ENCODE measurements at regions of chr14 and their contacts with region 1.

Region 1: DNA sequence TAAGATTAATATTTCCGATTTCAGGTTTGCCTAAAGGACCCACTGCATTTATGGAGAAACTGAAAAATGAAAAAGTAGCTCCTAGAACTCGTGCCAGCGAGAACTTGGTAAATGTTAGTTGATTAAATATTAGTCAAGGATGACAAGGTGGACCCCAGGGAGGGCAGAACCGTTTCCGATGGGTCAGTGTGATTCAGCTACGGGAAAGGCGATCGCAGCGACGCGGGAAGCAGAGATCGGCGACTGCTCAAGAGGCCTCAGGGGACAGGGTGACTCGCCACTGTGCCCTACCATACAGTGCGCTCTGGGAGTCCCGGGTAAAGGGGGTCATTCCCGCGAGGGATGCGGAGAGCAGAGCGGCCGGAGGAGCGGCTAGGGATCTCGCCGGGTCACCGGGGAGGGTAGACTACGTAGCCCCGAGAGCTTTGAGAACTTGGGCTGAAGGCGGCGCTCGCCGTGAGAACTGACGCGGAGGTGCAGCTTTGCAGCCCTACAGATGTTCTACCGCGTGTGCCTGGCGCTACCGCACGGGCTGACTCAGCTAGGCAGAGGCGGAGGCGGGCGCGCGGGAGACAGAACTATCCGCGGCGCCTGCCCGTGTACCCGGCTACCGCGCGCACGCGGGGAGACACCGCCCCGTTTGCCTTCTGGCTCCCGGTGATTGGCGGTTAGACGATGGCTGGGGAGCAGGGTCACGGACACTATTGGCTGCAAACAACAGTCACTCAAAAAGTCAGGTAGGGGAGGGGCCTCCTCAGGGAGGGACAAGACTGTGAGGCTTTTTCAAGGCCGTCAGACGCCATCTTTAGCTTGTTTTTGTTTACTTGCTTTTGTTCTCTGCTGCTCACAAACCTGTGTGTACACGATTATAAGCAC is 3.2 kb downstream of the C14orf93 start:
- DNase-seq: peak; percentile 99
- H3K4me3 ChIP-seq: peak overlapping the region; percentile 96
- H3K4me3 Mint-ChIP-seq: peak overlapping the region; percentile 94 to 99 (median 97)
- H3K27ac ChIP-seq: peak overlapping the region; percentile 80
- H3K27ac Mint-ChIP-seq: peak overlapping the region; percentile 90 to 99 (median 97)
- H3K4me1 ChIP-seq: peaks cover 37% of the 10 kb centered on the region
- H3K4me1 Mint-ChIP-seq: peaks cover 17 to 52% (median 34%) of the 10 kb centered on the region in 4 donors
- H3K27me3 ChIP-seq: no peaks in the 10 kb centered on the region
- H3K27me3 Mint-ChIP-seq: no peaks in the 10 kb centered on the region

Region 2: DNA sequence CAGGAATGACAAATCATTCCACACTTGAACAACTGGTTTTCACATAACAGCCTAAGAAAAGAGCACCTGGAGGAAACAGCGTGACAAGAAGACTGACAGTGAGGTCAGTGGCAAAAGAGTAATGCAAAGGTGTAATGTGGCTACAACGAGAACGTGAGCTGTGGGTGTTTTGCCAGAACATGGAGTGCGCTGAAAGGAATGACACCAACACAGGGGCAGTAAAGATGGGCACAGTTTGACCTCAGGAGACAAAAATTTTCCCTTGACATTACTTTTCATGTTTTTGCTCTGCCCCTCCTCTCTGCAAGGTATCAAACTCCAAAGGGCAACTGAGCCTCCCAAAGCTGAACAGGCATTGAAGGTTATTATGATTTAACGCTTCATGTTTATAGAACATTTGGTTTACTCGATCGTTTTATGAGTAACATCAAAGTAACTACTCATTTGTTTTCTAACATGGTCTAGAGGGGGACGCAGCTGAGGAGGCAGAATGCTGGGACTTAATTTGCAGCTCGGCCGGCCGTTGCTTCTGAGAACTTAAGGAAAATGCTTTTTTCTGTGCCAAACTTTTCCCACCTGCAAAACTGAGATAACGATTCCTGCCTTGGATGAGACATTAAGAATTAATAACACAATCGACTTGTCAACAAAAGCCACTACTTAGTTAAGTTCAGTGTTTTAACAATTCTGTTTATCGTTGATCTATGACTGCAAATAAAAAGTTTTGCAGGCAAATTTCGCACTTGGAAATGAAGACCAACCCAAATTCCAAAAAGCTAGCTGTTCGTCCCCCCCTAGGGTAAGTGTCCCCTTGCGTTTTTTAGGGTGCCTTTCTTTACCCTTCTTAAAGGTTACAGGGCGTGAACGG is 50.8 kb before region 1 on chr14:
- CTCF ChIA-PET with region 1: interaction called, 3 read pairs
- POLR2A ChIA-PET with region 1: interaction called, 22 read pairs
- intact Hi-C with region 1: no loop called
- DNase-seq: peak in 1 of 5 donors; percentile 11
- H3K4me3 ChIP-seq: peak overlapping the region; percentile 30 to 89
- H3K4me3 Mint-ChIP-seq: peak overlapping the region; percentile 91 to 94 (median 92)
- H3K27ac ChIP-seq: peak overlapping the region; percentile 79
- H3K27ac Mint-ChIP-seq: peak overlapping the region; percentile 92 to 95 (median 93)
- H3K4me1 ChIP-seq: peaks cover 16% of the 10 kb centered on the region
- H3K4me1 Mint-ChIP-seq: peaks cover 13 to 22% (median 16%) of the 10 kb centered on the region in 4 donors
- H3K27me3 ChIP-seq: no peaks in the 10 kb centered on the region
- H3K27me3 Mint-ChIP-seq: no peaks in the 10 kb centered on the region

Region 3: GRCh38 chr14:22994762-22995275 is 12.0 kb before region 1 on chr14:
- CTCF ChIA-PET with region 1: interaction called, 44 read pairs
- POLR2A ChIA-PET with region 1: interaction called, 18 read pairs
- intact Hi-C with region 1: no loop called
- DNase-seq: peak in 1 of 5 donors; percentile 29
- H3K4me3 ChIP-seq: no peak overlapping the region
- H3K4me3 Mint-ChIP-seq: no peak overlapping the region
- H3K27ac ChIP-seq: no peak overlapping the region
- H3K27ac Mint-ChIP-seq: peak overlapping the region in 2 of 7 donors; percentile 57 to 61
- H3K4me1 ChIP-seq: no peaks in the 10 kb centered on the region
- H3K4me1 Mint-ChIP-seq: no peaks in the 10 kb centered on the region
- H3K27me3 ChIP-seq: no peaks in the 10 kb centered on the region
- H3K27me3 Mint-ChIP-seq: no peaks in the 10 kb centered on the region

Region 4: GRCh38 chr14:23025151-23025814 is 18.5 kb after region 1 on chr14:
- CTCF ChIA-PET with region 1: interaction called, 12 read pairs
- POLR2A ChIA-PET with region 1: interaction called, 42 read pairs
- intact Hi-C with region 1: no loop called
- DNase-seq: no peak
- H3K4me3 ChIP-seq: no peak overlapping the region
- H3K4me3 Mint-ChIP-seq: peak overlapping the region in 3 of 8 donors; percentile 49 to 62 (median 60)
- H3K27ac ChIP-seq: no peak overlapping the region
- H3K27ac Mint-ChIP-seq: peak overlapping the region in 5 of 7 donors; percentile 19 to 68 (median 61)
- H3K4me1 ChIP-seq: peaks cover 46% of the 10 kb centered on the region
- H3K4me1 Mint-ChIP-seq: peaks cover 32 to 53% (median 41%) of the 10 kb centered on the region in 4 donors
- H3K27me3 ChIP-seq: no peaks in the 10 kb centered on the region
- H3K27me3 Mint-ChIP-seq: no peaks in the 10 kb centered on the region

Region 5: GRCh38 chr14:23057757-23058653 is 51.2 kb after region 1 on chr14:
- CTCF ChIA-PET with region 1: interaction called, 44 read pairs
- POLR2A ChIA-PET with region 1: interaction called, 15 read pairs
- intact Hi-C with region 1: loop called (anchors 1 kb)
- DNase-seq: peak; percentile 80 to 84 (median 82)
- H3K4me3 ChIP-seq: peak overlapping the region; percentile 36 to 89
- H3K4me3 Mint-ChIP-seq: peak overlapping the region; percentile 84 to 91 (median 88)
- H3K27ac ChIP-seq: peak overlapping the region; percentile 36
- H3K27ac Mint-ChIP-seq: peak overlapping the region in 6 of 7 donors; percentile 60 to 83 (median 82)
- H3K4me1 ChIP-seq: peaks cover 17% of the 10 kb centered on the region
- H3K4me1 Mint-ChIP-seq: peaks cover 11 to 21% (median 15%) of the 10 kb centered on the region in 4 donors
- H3K27me3 ChIP-seq: no peaks in the 10 kb centered on the region
- H3K27me3 Mint-ChIP-seq: peaks cover 0 to 1% of the 10 kb centered on the region in 2 donors